ENCODE measurements at regions of chr3 and their contacts with region 1.

Region 1: GRCh38 chr3:8607234-8608040 is 37.2 kb downstream of the SSUH2 start:
- DNase-seq: no peak
- H3K4me3 ChIP-seq: no peak overlapping the region
- CTCF ChIP-seq: peak; percentile 73

Region 2: DNA sequence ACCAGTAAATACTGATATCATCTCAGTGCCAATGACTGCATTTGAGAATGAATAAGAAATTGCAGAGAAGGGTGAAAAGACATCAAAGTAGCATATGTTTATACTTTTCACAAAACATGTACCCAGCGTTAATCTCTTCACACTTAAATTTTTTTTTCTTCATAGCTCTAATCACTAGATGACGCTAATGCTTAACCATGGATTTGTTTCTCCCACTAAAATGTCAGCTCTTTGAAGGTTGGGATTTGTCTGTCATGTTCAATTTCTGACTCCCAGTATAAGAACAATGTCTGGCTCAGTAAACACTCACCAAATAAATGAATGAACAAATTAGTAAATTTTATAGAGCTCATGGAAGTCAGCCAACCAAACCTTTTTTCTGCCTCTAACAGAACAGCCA is 184.1 kb before region 1 on chr3:
- CTCF ChIA-PET with region 1: interaction called, 16 read pairs
- POLR2A ChIA-PET with region 1: no interaction called
- DNase-seq: no peak
- H3K4me3 ChIP-seq: no peak overlapping the region
- CTCF ChIP-seq: no peak

Region 3: DNA sequence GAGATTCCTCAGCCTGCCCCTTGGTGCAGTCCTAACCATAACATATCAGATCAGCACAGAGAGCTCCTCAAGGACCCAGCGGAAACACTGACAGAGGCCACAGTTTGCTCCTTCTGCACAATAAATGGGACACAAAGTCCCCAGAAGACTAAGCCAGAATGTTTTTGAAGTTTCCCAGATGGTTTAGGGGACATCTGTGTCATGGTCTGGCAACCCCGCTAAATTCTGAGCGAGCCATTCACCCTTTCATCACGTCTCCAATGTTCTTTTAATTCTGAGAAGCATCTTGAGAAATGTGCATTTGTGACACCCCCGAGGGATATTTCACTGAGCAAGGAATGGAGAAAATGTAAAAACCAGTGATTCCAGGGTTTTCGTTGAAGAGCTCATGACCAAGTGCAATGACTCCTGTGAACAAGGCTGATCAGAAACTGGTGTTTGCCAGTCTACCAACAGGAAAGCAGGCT is 170.7 kb before region 1 on chr3:
- CTCF ChIA-PET with region 1: interaction called, 166 read pairs
- POLR2A ChIA-PET with region 1: no interaction called
- DNase-seq: no peak
- H3K4me3 ChIP-seq: no peak overlapping the region
- CTCF ChIP-seq: no peak

Region 4: GRCh38 chr3:8593026-8593827 is 14.2 kb before region 1 on chr3:
- CTCF ChIA-PET with region 1: interaction called, 11 read pairs
- POLR2A ChIA-PET with region 1: no interaction called
- DNase-seq: no peak
- H3K4me3 ChIP-seq: no peak overlapping the region
- CTCF ChIP-seq: no peak

Measured in AG04449 (cell line).